HEK293 (cell line): ENCODE measurements at regions of chr7 and their contacts with region 1.

Region 1: GRCh38 chr7:8015100-8015748 is 46.6 kb downstream of the GLCCI1 start:
- H3K4me3 ChIP-seq: no peak overlapping the region
- H3K27ac ChIP-seq: no peak overlapping the region
- H3K4me1 ChIP-seq: no peaks in the 10 kb centered on the region
- CTCF ChIP-seq: no peak

Region 2: GRCh38 chr7:7895754-7896153 is 119.5 kb before region 1 on chr7:
- CTCF ChIA-PET with region 1: no interaction called
- POLR2A ChIA-PET with region 1: no interaction called
- H3K4me3 ChIP-seq: no peak overlapping the region
- H3K27ac ChIP-seq: no peak overlapping the region
- H3K4me1 ChIP-seq: no peaks in the 10 kb centered on the region
- CTCF ChIP-seq: no peak

Region 3: GRCh38 chr7:8035647-8036518 is 20.7 kb after region 1 on chr7:
- CTCF ChIA-PET with region 1: interaction called, 11 read pairs
- POLR2A ChIA-PET with region 1: no interaction called
- H3K4me3 ChIP-seq: no peak overlapping the region
- H3K27ac ChIP-seq: no peak overlapping the region
- H3K4me1 ChIP-seq: no peaks in the 10 kb centered on the region
- CTCF ChIP-seq: no peak